MCF 10A (cell line): ENCODE measurements at regions of chr14 and their contacts with region 1.

Region 1: DNA sequence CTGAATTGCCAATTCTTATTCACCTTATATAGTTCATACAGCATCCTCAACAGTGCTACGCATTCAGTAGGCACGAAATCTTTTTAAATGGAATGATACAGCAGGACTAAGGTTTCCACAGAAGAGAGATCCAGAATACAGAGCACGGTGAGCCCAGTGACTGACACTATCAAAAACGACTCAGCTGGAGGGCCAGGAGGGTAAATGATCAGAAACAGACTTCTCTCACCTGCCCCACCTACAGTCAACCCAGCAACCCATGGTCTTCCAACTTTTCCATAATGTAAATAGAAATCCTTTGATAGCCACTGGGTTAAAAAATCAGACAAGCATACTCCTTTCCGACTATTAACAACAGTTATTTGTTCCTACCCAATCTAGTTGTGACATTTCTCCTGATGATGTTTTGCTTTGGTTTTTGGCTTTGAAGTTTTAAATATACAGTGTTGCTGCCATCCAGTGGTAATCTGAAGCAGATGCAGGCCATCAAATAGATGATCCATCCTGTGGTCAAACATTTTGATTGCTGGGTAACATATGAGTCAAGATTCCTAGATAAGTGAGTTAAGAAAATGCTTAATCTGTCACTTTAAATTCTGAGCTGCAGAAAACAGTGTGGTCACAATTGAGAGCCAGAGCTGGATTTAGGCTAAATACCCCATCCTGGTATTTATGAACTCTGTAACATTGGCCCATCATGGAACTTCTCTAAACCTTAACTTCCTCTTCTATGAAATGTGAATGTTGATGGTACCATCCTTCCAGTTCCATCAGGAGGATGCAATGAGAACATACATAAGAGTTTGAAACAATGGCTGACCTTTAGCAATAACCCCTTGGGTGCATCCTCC is 42.0 kb downstream of the GPHB5 start:
- DNase-seq: peak; percentile 56
- H3K4me3 Mint-ChIP-seq: no peak overlapping the region
- H3K27ac Mint-ChIP-seq: no peak overlapping the region
- H3K4me1 Mint-ChIP-seq: no peaks in the 10 kb centered on the region
- H3K27me3 Mint-ChIP-seq: no peaks in the 10 kb centered on the region
- CTCF ChIP-seq: peak; percentile 77

Region 2: GRCh38 chr14:62156052-62156451 is 1120.7 kb before region 1 on chr14:
- CTCF ChIA-PET with region 1: interaction called, 12 read pairs
- POLR2A ChIA-PET with region 1: no interaction called
- intact Hi-C with region 1: no loop called
- DNase-seq: no peak
- H3K4me3 Mint-ChIP-seq: no peak overlapping the region
- H3K27ac Mint-ChIP-seq: no peak overlapping the region
- H3K4me1 Mint-ChIP-seq: no peaks in the 10 kb centered on the region
- H3K27me3 Mint-ChIP-seq: no peaks in the 10 kb centered on the region
- CTCF ChIP-seq: no peak

Region 3: DNA sequence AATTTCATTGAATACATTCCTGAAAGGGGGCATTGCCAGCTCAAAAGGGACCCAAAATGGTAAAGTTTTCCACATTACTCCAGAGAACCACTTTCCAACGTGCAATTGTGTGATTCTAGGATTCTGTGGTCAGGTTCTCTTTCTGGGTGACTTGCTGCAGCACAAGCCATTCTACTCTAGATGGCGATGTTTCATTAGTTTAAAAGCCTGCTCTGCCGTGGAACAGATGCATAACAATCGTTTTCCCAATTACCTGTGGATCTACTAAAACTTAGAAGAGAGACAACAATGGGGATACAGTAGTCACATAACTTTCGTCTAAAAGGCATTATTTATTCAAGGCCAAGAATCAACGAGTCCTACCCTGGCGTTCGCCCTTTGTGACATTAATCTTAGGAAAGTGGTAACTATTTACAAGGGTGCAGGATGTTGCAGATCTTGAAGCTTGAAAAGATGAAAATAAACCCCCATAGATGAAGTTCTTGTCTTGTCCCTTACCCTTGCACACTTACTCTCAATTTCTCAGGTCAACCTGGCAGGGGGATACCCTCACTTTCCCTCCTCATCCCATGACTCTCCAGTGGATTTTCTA is 1113.6 kb before region 1 on chr14:
- CTCF ChIA-PET with region 1: interaction called, 32 read pairs
- POLR2A ChIA-PET with region 1: no interaction called
- intact Hi-C with region 1: loop called (anchors 1 kb)
- DNase-seq: peak; percentile 64
- H3K4me3 Mint-ChIP-seq: no peak overlapping the region
- H3K27ac Mint-ChIP-seq: no peak overlapping the region
- H3K4me1 Mint-ChIP-seq: no peaks in the 10 kb centered on the region
- H3K27me3 Mint-ChIP-seq: no peaks in the 10 kb centered on the region
- CTCF ChIP-seq: peak; percentile 84

Region 4: GRCh38 chr14:62168564-62169155 is 1108.1 kb before region 1 on chr14:
- CTCF ChIA-PET with region 1: interaction called, 32 read pairs
- POLR2A ChIA-PET with region 1: no interaction called
- intact Hi-C with region 1: loop called (anchors 1 kb)
- DNase-seq: no peak
- H3K4me3 Mint-ChIP-seq: no peak overlapping the region
- H3K27ac Mint-ChIP-seq: no peak overlapping the region
- H3K4me1 Mint-ChIP-seq: no peaks in the 10 kb centered on the region
- H3K27me3 Mint-ChIP-seq: no peaks in the 10 kb centered on the region
- CTCF ChIP-seq: peak; percentile 29

Region 5: DNA sequence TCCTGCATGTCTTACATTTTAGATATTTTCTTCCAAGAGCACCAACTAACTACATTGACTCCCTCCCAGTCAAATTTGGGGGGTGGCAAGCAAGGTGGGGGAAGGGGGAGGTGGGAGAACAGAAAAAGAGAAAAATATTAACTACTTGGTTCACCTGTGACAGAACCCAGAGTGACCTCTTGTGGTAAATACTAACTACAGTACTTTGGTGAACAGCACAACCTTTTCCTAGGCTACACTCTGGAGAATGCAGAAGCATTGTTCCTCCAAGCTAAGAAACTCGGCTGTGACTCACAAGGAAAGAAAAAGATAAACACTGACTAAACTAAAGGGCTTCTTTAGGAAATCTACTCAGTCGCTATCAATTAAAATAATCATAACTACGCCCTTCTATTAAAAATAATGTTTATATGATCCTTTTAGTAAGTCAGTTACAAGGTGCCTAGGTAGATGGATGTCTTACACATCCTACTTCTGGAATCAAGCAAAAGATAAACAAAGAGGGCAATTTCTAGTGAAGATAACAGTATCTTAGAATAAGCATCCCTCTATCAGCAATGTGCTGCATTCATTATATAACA is 236.8 kb before region 1 on chr14:
- CTCF ChIA-PET with region 1: interaction called, 4 read pairs
- POLR2A ChIA-PET with region 1: no interaction called
- intact Hi-C with region 1: loop called (anchors 1 kb)
- DNase-seq: peak; percentile 55
- H3K4me3 Mint-ChIP-seq: no peak overlapping the region
- H3K27ac Mint-ChIP-seq: no peak overlapping the region
- H3K4me1 Mint-ChIP-seq: no peaks in the 10 kb centered on the region
- H3K27me3 Mint-ChIP-seq: no peaks in the 10 kb centered on the region
- CTCF ChIP-seq: peak; percentile 75

Region 6: DNA sequence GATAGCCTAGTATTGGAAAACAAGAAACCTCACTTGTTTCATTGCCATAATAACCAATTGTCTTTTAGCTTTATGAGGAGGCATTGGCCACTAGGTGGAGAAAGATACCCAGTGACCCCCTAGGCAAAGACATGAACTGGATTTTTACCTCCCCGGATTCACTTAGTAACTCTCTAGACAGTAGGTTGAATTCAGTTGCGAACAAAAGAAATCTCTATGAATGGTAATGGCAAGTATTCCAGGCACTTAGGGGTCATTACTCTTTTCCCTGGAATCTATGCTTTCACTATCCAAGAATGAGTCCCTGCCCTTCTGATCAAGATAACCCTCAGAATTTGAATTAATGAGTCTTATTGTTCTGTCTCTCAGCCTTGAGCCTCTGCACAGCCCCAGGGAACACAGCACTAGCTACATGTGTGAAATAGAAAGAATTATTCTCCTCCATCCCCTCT is 101.9 kb before region 1 on chr14:
- CTCF ChIA-PET with region 1: interaction called, 62 read pairs
- POLR2A ChIA-PET with region 1: no interaction called
- intact Hi-C with region 1: loop called (anchors 1 kb)
- DNase-seq: peak; percentile 60
- H3K4me3 Mint-ChIP-seq: no peak overlapping the region
- H3K27ac Mint-ChIP-seq: no peak overlapping the region
- H3K4me1 Mint-ChIP-seq: peaks cover 19% of the 10 kb centered on the region
- H3K27me3 Mint-ChIP-seq: no peaks in the 10 kb centered on the region
- CTCF ChIP-seq: peak; percentile 58

Region 7: GRCh38 chr14:63205044-63205575 is 71.6 kb before region 1 on chr14:
- CTCF ChIA-PET with region 1: no interaction called
- POLR2A ChIA-PET with region 1: no interaction called
- intact Hi-C with region 1: no loop called
- DNase-seq: no peak
- H3K4me3 Mint-ChIP-seq: no peak overlapping the region
- H3K27ac Mint-ChIP-seq: no peak overlapping the region
- H3K4me1 Mint-ChIP-seq: peaks cover 9% of the 10 kb centered on the region
- H3K27me3 Mint-ChIP-seq: no peaks in the 10 kb centered on the region
- CTCF ChIP-seq: no peak